Activated naive CD4-positive, alpha-beta T cell treated with anti-CD3 and anti-CD28 coated beads for 36 hours (primary cell): ENCODE measurements at regions of chr3 and their contacts with region 1.

Region 1: DNA sequence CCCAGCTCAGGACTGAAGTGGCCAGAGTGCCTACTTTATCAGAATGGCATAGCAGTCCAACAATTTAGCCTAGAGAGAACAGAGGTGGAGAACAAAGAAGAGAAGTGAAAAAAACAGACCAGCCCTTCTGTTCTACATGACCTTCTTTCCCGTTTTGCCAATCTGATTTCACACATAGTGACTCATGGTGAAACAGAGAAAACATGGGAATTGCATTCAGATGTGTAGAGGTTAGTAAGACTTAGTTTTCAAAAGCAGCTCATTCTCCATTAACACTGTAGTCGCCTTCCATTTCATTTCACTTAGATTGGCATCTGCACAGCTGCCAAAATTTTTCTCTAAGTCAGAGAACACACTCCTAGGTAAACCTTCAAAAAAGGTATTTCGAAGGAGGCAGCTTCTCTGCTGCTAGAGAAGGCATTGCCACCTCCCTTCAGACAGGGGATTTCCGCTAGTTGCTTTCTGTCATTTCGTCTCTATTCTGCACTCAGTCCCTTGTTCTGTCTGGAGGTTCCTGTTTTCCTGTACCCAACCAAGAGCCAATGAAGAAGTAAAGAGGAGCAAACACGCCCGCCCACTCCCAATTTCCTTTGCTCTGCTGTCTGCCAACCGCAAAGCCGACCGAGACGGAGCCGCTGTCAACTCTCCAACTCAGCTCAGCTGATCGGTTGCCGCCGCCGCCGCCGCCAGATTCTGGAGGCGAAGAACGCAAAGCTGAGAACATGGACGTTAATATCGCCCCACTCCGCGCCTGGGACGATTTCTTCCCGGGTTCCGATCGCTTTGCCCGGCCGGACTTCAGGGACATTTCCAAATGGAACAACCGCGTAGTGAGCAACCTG is at the start of gene ARL6IP5:
- DNase-seq: peak; percentile 97
- H3K4me3 Mint-ChIP-seq: peak within 1 kb of the TSS; percentile 89
- H3K27ac Mint-ChIP-seq: peak within 1 kb of the TSS; percentile 95
- H3K4me1 Mint-ChIP-seq: peaks cover 57% of the 10 kb centered on the region
- H3K27me3 Mint-ChIP-seq: no peaks in the 10 kb centered on the region
- total RNA-seq, gene ARL6IP5: 66.4 to 71.5 TPM

Region 2: GRCh38 chr3:67083277-67083676 is 2001.3 kb before region 1 on chr3:
- CTCF ChIA-PET with region 1: no interaction called
- intact Hi-C with region 1: loop called (anchors 2 kb)
- DNase-seq: peak; percentile 79
- H3K4me3 Mint-ChIP-seq: peak overlapping the region; percentile 61
- H3K27ac Mint-ChIP-seq: peak overlapping the region; percentile 94
- H3K4me1 Mint-ChIP-seq: peaks cover 31% of the 10 kb centered on the region
- H3K27me3 Mint-ChIP-seq: no peaks in the 10 kb centered on the region

Region 3: GRCh38 chr3:68088216-68088615 is 996.3 kb before region 1 on chr3:
- CTCF ChIA-PET with region 1: no interaction called
- intact Hi-C with region 1: loop called (anchors 10 kb)
- DNase-seq: peak; percentile 72
- H3K4me3 Mint-ChIP-seq: no peak overlapping the region
- H3K27ac Mint-ChIP-seq: no peak overlapping the region
- H3K4me1 Mint-ChIP-seq: peaks cover 62% of the 10 kb centered on the region
- H3K27me3 Mint-ChIP-seq: no peaks in the 10 kb centered on the region

Region 4: GRCh38 chr3:69013253-69014021 is 71.1 kb before region 1 on chr3 and contains the start of gene EOGT:
- CTCF ChIA-PET with region 1: interaction called, 3 read pairs
- intact Hi-C with region 1: loop called (anchors 1 kb)
- DNase-seq: peak; percentile 88
- H3K4me3 Mint-ChIP-seq: peak within 1 kb of the TSS; percentile 78
- H3K27ac Mint-ChIP-seq: peak within 1 kb of the TSS; percentile 73
- H3K4me1 Mint-ChIP-seq: peaks cover 15% of the 10 kb centered on the region
- H3K27me3 Mint-ChIP-seq: no peaks in the 10 kb centered on the region
- total RNA-seq, gene EOGT: 4.8 TPM

Region 5: GRCh38 chr3:69051756-69052471 is 32.6 kb before region 1 on chr3 and contains the start of gene TMF1:
- CTCF ChIA-PET with region 1: interaction called, 6 read pairs
- intact Hi-C with region 1: loop called (anchors 1 kb)
- DNase-seq: peak; percentile 98
- H3K4me3 Mint-ChIP-seq: peak within 1 kb of the TSS; percentile 97
- H3K27ac Mint-ChIP-seq: peak within 1 kb of the TSS; percentile 94
- H3K4me1 Mint-ChIP-seq: peaks cover 41% of the 10 kb centered on the region
- H3K27me3 Mint-ChIP-seq: no peaks in the 10 kb centered on the region
- total RNA-seq, gene TMF1: 23.3 to 25.2 TPM

Region 6: DNA sequence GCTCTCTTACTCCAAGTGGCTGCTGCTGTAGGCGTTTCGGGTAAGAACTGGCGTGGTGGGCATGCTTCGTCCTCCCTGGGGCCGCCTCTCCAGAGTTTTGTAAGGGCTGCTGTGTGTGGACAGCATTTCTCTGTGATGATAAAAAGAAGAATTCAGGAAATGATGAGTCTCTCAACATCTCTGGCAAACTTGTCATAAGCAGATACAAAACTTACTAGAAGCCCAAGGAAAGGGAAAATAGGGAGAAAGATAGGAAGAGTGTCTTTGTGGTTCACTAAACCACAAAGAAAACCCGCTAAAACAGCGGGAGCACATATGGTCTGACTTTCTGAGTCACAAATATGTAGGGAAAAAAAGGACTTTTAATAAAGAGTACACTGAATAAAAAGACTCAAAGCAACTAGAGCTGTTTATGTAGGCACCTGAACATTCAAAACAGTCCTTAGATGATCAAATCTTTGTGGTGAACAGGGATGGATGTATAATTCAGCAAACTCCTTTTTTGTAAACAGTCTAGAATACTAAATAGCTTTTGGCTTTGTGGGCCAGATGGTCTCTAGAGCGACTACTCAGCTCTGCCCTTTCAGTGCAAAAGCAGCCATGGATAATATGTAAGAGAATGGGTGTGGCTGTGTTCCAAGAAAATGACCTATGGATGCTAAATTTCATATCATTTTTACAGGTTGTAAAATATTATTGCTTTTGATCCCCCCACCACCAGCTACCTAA is 98.2 kb after region 1 on chr3:
- CTCF ChIA-PET with region 1: no interaction called
- intact Hi-C with region 1: no loop called
- DNase-seq: no peak
- H3K4me3 Mint-ChIP-seq: no peak overlapping the region
- H3K27ac Mint-ChIP-seq: no peak overlapping the region
- H3K4me1 Mint-ChIP-seq: peaks cover 16% of the 10 kb centered on the region
- H3K27me3 Mint-ChIP-seq: no peaks in the 10 kb centered on the region